Prostate gland (tissue), 2 donors: ENCODE measurements at regions of chr17 and their contacts with region 1.

Region 1: GRCh38 chr17:47698749-47699535 is 5.0 kb downstream of the TBKBP1 start:
- DNase-seq: peak; percentile 22
- H3K4me3 ChIP-seq: no peak overlapping the region
- H3K27ac ChIP-seq: no peak overlapping the region
- H3K4me1 ChIP-seq: no peaks in the 10 kb centered on the region
- H3K27me3 ChIP-seq: no peaks in the 10 kb centered on the region
- CTCF ChIP-seq: peak; percentile 62 to 98 (median 78)
- POLR2A ChIP-seq: no peak

Region 2: DNA sequence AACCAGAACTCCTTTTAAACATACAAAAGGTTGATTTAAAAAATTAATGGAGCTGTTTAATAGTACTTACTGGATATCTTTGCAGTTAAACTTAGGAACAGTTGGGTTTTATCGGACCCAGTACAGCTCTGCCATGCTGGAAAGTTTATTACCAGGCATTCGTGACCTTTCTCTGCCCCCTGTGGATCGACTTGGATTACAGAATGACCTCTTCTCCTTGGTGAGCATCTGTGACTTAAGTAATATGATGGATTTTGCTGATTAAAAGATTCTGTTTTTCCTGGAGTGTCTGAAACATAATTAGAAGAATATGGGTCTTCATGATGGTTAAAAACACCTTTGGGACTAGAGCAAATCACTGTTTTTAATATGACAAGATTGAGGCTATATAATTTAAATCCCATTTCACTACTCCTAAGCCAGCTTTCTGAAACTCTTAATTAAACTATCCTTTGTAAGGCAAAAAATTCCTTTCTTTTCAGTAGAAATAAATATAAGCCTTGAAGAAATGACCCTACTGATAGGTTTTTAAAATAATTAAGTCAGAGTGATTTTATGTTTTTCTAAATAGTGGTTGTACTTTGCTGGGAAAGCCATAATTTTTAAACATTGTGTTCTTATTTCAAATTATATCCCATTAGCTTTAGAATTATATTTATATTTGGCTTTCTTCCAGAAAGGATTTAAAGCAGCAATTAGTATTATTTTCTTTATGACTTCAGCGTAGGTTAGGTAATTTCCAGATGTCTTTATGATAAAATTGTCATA is 94.9 kb before region 1 on chr17:
- intact Hi-C with region 1: no loop called
- DNase-seq: no peak
- H3K4me3 ChIP-seq: no peak overlapping the region
- H3K27ac ChIP-seq: no peak overlapping the region
- H3K4me1 ChIP-seq: no peaks in the 10 kb centered on the region
- H3K27me3 ChIP-seq: no peaks in the 10 kb centered on the region
- CTCF ChIP-seq: no peak
- POLR2A ChIP-seq: no peak

Region 3: GRCh38 chr17:47615766-47616424 is 83.0 kb before region 1 on chr17:
- intact Hi-C with region 1: no loop called
- DNase-seq: no peak
- H3K4me3 ChIP-seq: no peak overlapping the region
- H3K27ac ChIP-seq: no peak overlapping the region
- H3K4me1 ChIP-seq: peaks cover 3% of the 10 kb centered on the region
- H3K27me3 ChIP-seq: no peaks in the 10 kb centered on the region
- CTCF ChIP-seq: peak; percentile 57 to 87 (median 82)
- POLR2A ChIP-seq: no peak

Region 4: DNA sequence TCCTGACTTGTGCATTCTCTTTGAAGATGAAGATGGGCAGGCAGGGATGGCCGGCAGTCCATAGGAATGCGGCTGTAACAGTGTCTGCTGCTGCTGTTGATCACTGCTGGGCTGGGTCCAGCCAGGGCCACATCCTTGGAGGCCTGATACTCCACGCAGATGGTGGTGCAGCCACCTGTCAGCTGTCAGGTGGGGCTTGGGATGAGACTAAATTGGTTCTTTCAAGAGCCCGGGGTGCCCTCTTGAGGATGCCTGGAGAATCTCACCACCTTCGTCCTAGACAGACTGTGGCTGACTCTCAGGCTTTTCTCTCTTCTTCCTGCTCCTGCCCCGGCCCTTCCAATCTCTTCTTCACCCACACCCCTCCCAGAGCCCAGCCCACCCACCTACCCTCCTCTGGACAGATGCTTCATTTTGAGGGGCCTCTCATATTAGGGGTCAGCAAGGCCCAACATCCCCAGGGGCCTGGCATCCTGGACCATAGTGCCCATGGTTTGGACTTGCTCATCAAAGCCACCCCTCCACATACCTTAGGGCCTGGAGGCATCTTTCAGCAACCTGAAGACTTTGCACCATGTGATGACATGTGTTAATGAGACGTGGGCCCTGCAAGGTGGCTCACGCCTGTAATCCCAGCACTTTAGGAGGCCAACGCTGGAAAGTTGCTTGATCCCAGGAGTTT is 103.5 kb after region 1 on chr17:
- intact Hi-C with region 1: loop called (anchors 10 kb)
- DNase-seq: peak; percentile 32
- H3K4me3 ChIP-seq: no peak overlapping the region
- H3K27ac ChIP-seq: no peak overlapping the region
- H3K4me1 ChIP-seq: no peaks in the 10 kb centered on the region
- H3K27me3 ChIP-seq: no peaks in the 10 kb centered on the region
- CTCF ChIP-seq: peak in 3 of 4 experiments; percentile 25 to 53 (median 45)
- POLR2A ChIP-seq: no peak